ENCODE measurements at regions of chr19 and their contacts with region 1.

Region 1: GRCh38 chr19:15125232-15126067 is 18.2 kb downstream of the SYDE1 start:
- DNase-seq: peak; percentile 98
- H3K4me3 ChIP-seq: peak overlapping the region; percentile 49 to 80 (median 55)
- H3K27ac ChIP-seq: peak overlapping the region; percentile 52
- H3K4me1 ChIP-seq: peaks cover 3% of the 10 kb centered on the region
- H3K27me3 ChIP-seq: peaks cover 0 to 3% of the 10 kb centered on the region in 2 experiments
- CTCF ChIP-seq: no peak
- POLR2A ChIP-seq: peak; percentile 25

Region 2: GRCh38 chr19:15015946-15016542 is 109.4 kb before region 1 on chr19:
- CTCF ChIA-PET with region 1: no interaction called
- POLR2A ChIA-PET with region 1: no interaction called
- dilution Hi-C with region 1: no loop called
- intact Hi-C with region 1: no loop called
- DNase-seq: peak; percentile 6
- H3K4me3 ChIP-seq: no peak overlapping the region
- H3K27ac ChIP-seq: no peak overlapping the region
- H3K4me1 ChIP-seq: no peaks in the 10 kb centered on the region
- H3K27me3 ChIP-seq: no peaks in the 10 kb centered on the region
- CTCF ChIP-seq: no peak
- POLR2A ChIP-seq: no peak

Region 3: DNA sequence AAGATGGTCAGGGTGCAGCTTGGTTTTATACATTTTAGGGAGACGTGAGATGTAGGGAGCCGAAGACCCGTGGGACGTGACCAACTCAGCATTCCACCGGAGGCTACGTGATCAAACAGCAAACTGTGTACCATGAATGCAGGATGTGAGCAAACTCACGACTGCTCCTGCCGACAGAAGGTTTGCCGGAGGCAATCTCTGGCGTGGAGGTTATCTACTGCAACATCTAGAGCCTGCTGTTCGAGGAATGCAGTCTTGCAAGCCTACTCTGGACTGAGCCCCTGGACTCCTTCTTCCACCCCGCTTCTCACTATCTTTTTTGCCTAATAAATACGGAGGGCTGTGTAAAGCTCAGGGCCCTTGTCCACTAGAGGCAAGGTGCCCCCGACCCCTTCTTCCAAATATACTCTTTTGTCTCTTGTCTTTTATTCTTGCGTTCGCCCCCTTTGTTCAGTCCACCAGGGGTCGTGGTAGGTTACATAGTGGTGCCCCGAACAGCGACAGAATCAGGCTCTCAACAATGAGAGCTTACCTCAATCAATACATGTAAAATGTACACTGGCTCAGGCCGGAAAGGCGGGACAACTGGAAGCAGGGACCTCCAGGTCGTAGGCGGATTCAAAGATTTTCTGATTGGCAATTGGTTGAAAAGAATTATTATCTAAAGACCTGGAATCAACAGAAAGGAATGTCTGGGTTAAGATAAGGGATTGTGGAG is 52.4 kb before region 1 on chr19:
- CTCF ChIA-PET with region 1: no interaction called
- POLR2A ChIA-PET with region 1: no interaction called
- dilution Hi-C with region 1: no loop called
- intact Hi-C with region 1: no loop called
- DNase-seq: no peak
- H3K4me3 ChIP-seq: no peak overlapping the region
- H3K27ac ChIP-seq: no peak overlapping the region
- H3K4me1 ChIP-seq: no peaks in the 10 kb centered on the region
- H3K27me3 ChIP-seq: no peaks in the 10 kb centered on the region
- CTCF ChIP-seq: no peak
- POLR2A ChIP-seq: no peak

Region 4: DNA sequence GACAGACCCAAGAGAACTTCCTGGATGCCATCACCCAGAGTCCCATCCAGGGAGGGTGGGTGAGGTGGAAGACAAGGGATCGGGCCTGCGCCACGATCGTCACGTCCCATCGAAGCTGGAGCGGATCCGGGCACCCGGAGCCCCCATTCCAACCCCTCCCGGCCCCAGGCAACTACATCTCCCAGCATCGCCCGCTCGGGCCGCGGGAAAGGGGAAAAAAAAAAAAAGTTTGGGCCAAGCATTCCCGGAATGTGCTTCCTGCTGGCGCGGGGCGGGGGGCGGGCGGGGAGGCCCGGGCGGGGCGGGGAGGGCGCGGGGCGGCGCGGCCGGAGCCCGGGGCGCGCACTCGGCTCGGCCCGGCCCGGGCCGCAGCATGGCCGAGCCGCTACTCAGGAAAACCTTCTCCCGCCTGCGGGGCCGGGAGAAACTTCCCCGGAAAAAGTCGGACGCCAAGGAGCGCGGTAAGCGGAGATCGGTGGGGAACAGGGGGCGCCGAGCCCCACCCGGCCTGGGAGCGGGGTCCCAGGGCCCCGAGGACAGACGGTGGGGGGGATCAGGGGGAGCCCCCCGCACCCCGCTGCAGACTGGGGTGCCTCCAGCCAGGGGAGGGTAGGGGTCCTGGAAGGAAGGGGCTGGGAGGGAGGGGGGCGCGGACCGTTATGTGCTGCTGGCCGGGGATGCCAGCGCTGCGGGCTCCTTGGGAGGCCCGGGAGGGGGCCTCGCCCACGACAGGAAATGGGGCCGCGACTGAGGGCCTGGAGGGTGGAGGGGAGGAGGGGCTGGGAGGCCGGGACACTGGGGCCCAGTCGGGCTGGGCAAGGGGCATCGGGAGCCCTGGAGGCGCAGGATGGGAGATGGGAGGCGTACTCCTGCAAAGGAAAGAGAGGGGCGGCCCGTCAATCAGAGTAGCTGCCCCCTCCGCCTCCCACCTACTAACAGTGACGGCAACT is 18.1 kb before region 1 on chr19 and contains the start of gene SYDE1:
- CTCF ChIA-PET with region 1: interaction called, 7 read pairs
- POLR2A ChIA-PET with region 1: interaction called, 4 read pairs
- dilution Hi-C with region 1: no loop called
- intact Hi-C with region 1: loop called (anchors 1 kb)
- DNase-seq: peak; percentile 26
- H3K4me3 ChIP-seq: peak within 1 kb of the TSS; percentile 82 to 93 (median 93)
- H3K27ac ChIP-seq: peak within 1 kb of the TSS; percentile 60
- H3K4me1 ChIP-seq: peaks cover 8% of the 10 kb centered on the region
- H3K27me3 ChIP-seq: no peaks in the 10 kb centered on the region
- CTCF ChIP-seq: no peak
- POLR2A ChIP-seq: peak; percentile 75
- total RNA-seq, gene SYDE1: 35.3 and 38.2 TPM in 2 replicates

Region 5: GRCh38 chr19:15154002-15154612 is 28.7 kb after region 1 on chr19:
- CTCF ChIA-PET with region 1: interaction called, 8 read pairs
- POLR2A ChIA-PET with region 1: no interaction called
- dilution Hi-C with region 1: no loop called
- intact Hi-C with region 1: loop called (anchors 1 kb)
- DNase-seq: peak; percentile 52
- H3K4me3 ChIP-seq: no peak overlapping the region
- H3K27ac ChIP-seq: no peak overlapping the region
- H3K4me1 ChIP-seq: no peaks in the 10 kb centered on the region
- H3K27me3 ChIP-seq: peaks cover 0 to 7% of the 10 kb centered on the region in 2 experiments
- CTCF ChIP-seq: peak; percentile 51 to 56
- POLR2A ChIP-seq: no peak

Measured in endothelial cell of umbilical vein (primary cell).